K562 (cell line): ENCODE measurements at regions of chr3 and their contacts with region 1.

Region 1: DNA sequence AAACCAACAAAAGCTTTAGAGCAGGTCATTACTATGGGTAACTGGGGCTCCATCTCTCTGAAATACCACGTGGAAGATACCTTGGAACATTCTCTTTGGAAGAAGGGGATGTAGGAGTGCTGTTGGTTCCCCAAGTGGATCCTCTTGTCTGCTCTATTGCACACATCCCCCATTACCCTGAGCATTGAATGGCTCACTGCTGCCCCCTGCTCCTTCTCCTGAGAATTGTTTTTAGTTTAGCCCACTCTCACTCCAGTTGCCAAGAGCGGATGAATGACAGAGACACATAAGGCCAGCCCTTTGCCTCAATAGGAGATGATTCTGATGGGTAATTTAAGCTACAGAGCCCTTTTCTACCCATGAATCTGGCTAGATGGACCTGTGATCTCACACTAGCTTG is 135.6 kb upstream of the SUCLG2 start:
- DNase-seq: peak; percentile 38 to 45 (median 42)
- ATAC-seq: peak; percentile 91
- H3K4me3 ChIP-seq: no peak overlapping the region
- H3K27ac ChIP-seq: no peak overlapping the region
- H3K4me1 ChIP-seq: no peaks in the 10 kb centered on the region
- H3K27me3 ChIP-seq: no peaks in the 10 kb centered on the region
- CTCF ChIP-seq: peak; percentile 56 to 63 (median 57)
- EP300 ChIP-seq: no peak
- POLR2A ChIP-seq: no peak
- RAD21 ChIP-seq: peak; percentile 41 to 68; a peak in 3 of 4 replicates

Region 2: GRCh38 chr3:66938338-66938963 is 851.6 kb before region 1 on chr3:
- CTCF ChIA-PET with region 1: no interaction called
- POLR2A ChIA-PET with region 1: no interaction called
- in situ Hi-C with region 1: loop called (anchors 25 kb)
- intact Hi-C with region 1: no loop called
- DNase-seq: peak; percentile 18 to 64 (median 24)
- ATAC-seq: peak; percentile 89
- H3K4me3 ChIP-seq: no peak overlapping the region
- H3K27ac ChIP-seq: no peak overlapping the region
- H3K4me1 ChIP-seq: no peaks in the 10 kb centered on the region
- H3K27me3 ChIP-seq: peaks cover 0 to 6% of the 10 kb centered on the region in 2 experiments; a peak in 1 of 5 replicates
- CTCF ChIP-seq: peak; percentile 60 to 65 (median 64)
- EP300 ChIP-seq: no peak
- POLR2A ChIP-seq: no peak
- RAD21 ChIP-seq: peak; percentile 71 to 79

Region 3: DNA sequence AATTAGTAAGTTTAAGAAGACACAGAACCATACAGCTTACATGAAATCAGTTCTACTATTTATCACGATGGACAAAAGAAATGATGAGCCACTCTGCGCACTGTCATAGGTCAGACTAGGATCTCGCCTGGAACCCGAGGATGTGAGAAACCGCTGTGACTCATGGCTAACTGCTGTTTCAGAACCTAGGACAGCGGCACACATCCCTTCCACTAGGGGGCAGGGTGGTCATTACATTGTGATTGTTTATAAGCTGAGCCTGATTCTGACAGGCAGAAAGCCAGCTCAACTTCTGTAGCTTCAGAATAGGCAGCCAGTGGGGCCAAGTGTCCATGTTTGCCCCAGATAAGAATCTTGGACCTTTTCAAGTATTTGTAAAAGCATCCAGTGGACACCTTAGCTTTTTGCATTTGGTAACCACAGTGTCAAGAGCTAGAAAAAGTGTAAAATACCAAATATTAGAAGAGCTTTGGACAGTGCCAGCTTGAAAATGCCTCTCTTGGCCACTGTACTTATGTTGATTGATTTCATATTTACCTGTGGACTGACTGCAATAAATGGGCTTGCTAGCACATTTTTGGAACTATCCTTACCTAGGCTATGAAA is 676.1 kb before region 1 on chr3:
- CTCF ChIA-PET with region 1: no interaction called
- POLR2A ChIA-PET with region 1: no interaction called
- in situ Hi-C with region 1: no loop called
- intact Hi-C with region 1: loop called (anchors 10 kb)
- DNase-seq: peak; percentile 65 to 81 (median 74)
- ATAC-seq: peak; percentile 98
- H3K4me3 ChIP-seq: no peak overlapping the region
- H3K27ac ChIP-seq: no peak overlapping the region
- H3K4me1 ChIP-seq: no peaks in the 10 kb centered on the region
- H3K27me3 ChIP-seq: no peaks in the 10 kb centered on the region
- CTCF ChIP-seq: peak; percentile 82 to 92 (median 86)
- EP300 ChIP-seq: no peak
- POLR2A ChIP-seq: no peak
- RAD21 ChIP-seq: peak; percentile 63 to 84; a peak in 3 of 4 replicates

Region 4: DNA sequence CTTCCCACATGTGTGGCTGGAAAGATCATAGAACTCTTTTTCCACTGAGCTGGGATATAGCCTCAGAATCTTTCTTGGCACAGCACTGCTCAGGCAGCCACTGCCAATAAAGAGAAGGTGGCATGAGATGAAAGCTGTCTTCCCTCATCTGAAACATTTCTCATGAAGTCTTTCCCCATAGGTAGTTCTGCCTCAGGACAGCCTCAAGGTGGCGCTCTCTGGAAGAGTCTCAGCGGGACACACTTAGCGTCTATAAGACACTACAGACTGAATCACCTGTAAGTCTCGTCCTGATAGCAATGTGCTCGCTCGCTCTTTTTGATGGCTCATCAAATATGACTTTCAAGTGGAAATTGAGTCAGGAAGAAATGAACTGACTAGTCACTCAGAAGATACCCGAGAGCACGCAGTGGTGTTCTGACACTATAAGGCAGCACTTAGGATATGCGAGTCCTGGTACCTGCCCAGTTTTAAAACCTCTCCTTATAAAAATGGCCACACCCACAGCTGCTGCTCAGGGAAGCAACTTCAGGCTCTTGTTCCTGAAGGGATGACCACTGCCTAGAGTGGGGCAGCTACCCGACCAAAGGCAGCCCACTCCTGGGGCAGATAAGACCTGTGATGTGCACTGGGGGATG is 405.2 kb before region 1 on chr3:
- CTCF ChIA-PET with region 1: interaction called, 6 read pairs
- POLR2A ChIA-PET with region 1: no interaction called
- in situ Hi-C with region 1: no loop called
- intact Hi-C with region 1: loop called (anchors 1 kb)
- DNase-seq: peak; percentile 37 to 63 (median 38)
- ATAC-seq: peak; percentile 93
- H3K4me3 ChIP-seq: no peak overlapping the region
- H3K27ac ChIP-seq: no peak overlapping the region
- H3K4me1 ChIP-seq: no peaks in the 10 kb centered on the region; a peak in 1 of 5 replicates
- H3K27me3 ChIP-seq: no peaks in the 10 kb centered on the region
- CTCF ChIP-seq: peak; percentile 57 to 67 (median 60)
- EP300 ChIP-seq: no peak
- POLR2A ChIP-seq: no peak
- RAD21 ChIP-seq: peak; percentile 20 to 58; a peak in 2 of 4 replicates